SK-N-SH (cell line): ENCODE measurements at regions of chr11 and their contacts with region 1.

Region 1: DNA sequence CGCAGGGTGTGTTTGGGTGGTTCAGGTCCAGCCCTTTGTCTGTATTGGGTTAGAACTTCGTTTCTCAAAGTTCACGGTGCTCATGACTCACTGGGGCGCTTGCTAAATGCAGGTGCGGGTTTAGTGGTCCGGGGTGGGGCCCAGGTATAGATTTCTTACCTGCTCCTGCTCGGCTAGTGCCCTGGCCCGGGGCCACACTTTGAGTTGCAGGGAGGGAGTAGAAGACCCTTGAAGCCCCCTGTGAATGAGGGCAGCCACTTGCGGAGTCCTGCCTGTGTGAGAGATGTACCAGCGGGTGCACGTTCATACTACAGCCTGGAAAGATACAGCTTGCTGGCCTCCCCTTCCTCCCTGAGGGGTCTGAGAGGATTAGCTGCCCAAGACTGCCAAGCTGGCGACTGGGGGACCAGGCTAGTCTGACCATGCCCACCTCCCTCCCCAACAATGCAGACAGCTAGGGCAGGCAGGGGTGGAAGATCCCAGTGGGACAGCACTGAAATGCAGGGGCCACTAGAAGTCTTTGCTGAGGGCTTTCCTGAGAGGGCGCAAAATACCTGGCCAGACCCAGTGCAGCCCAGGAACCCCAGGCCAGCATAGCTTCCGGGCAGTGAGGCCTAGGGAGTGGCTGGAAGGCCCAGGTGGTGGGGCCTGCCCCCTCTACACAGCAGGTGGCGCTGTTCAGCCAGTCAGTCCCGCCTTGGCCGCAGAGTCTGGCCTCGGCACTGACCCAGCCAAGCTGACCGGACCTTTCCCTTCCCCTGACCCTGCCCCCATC is 5.1 kb upstream of the MYRF start:
- DNase-seq: peak; percentile 95
- H3K4me3 ChIP-seq: no peak overlapping the region; a peak in 1 of 4 replicates
- H3K27ac ChIP-seq: no peak overlapping the region; a peak in 1 of 4 replicates
- H3K4me1 ChIP-seq: peaks cover 0 to 11% of the 10 kb centered on the region in 2 experiments; a peak in 1 of 4 replicates
- H3K27me3 ChIP-seq: no peaks in the 10 kb centered on the region
- CTCF ChIP-seq: peak; percentile 87
- EP300 ChIP-seq: no peak
- RAD21 ChIP-seq: peak; percentile 79

Region 2: GRCh38 chr11:61724437-61724836 is 22.9 kb before region 1 on chr11:
- CTCF ChIA-PET with region 1: interaction called, 17 read pairs
- POLR2A ChIA-PET with region 1: no interaction called
- DNase-seq: no peak
- H3K4me3 ChIP-seq: no peak overlapping the region
- H3K27ac ChIP-seq: no peak overlapping the region
- H3K4me1 ChIP-seq: peaks cover 0 to 5% of the 10 kb centered on the region in 2 experiments; a peak in 1 of 4 replicates
- H3K27me3 ChIP-seq: no peaks in the 10 kb centered on the region
- CTCF ChIP-seq: no peak
- EP300 ChIP-seq: no peak
- RAD21 ChIP-seq: no peak

Region 3: GRCh38 chr11:61776551-61777075 is 29.2 kb after region 1 on chr11:
- CTCF ChIA-PET with region 1: interaction called, 78 read pairs
- POLR2A ChIA-PET with region 1: no interaction called
- DNase-seq: peak; percentile 90
- H3K4me3 ChIP-seq: no peak overlapping the region
- H3K27ac ChIP-seq: no peak overlapping the region; a peak in 1 of 4 replicates
- H3K4me1 ChIP-seq: peaks cover 0 to 34% of the 10 kb centered on the region in 2 experiments; a peak in 1 of 4 replicates
- H3K27me3 ChIP-seq: no peaks in the 10 kb centered on the region
- CTCF ChIP-seq: peak; percentile 73
- EP300 ChIP-seq: no peak
- RAD21 ChIP-seq: peak; percentile 70

Region 4: DNA sequence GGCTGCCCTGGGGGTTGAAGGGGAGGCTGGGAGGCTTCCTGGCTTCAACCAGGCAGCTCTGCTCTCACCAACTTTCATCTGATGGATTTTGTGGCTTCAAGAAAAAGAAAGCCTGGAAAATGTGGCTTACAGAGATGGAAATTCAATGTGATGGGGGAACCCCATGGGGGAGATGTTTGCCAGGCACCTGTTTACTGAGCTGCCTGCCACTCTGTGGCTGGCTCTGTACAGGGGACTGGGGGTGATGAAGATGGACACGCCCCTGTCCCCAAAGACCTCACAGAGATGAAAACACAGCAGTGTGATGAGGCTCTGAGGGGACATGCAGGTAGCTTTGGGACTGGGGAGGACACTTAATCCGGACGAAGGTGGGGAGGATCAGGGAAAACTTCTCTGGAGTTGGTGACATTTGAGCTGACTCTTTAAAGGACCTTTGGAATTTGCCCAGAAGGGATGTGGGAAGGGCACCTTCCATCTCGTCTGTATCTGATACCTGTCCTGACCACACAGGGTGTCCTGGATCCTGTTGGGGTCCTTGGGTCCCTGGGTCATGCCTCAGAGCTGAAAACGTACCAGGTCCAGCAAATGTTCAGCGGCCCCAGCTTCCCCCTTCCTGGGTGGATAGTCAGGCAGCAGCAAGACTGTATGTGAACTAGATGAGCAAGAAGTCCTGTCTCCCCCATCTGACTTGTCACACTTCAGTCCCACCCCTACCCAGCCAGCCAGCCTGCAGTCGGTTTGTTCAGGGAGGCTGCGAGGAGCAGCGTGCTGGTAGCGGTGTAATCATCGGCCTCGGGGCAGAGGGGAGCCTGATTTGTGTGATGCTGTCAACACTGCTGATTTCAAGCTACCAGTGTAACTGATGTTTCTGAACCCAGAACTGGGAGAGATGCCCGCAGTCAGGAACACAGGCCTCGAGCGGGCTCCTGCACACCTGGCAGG is 35.2 kb after region 1 on chr11:
- CTCF ChIA-PET with region 1: interaction called, 285 read pairs
- POLR2A ChIA-PET with region 1: interaction called, 4 read pairs
- DNase-seq: peak; percentile 71
- H3K4me3 ChIP-seq: no peak overlapping the region
- H3K27ac ChIP-seq: peak overlapping the region in 1 of 2 experiments; percentile 36; a peak in 1 of 4 replicates
- H3K4me1 ChIP-seq: peaks cover 0 to 31% of the 10 kb centered on the region in 2 experiments; a peak in 1 of 4 replicates
- H3K27me3 ChIP-seq: no peaks in the 10 kb centered on the region
- CTCF ChIP-seq: no peak
- EP300 ChIP-seq: no peak
- RAD21 ChIP-seq: no peak

Region 5: GRCh38 chr11:61816736-61817455 is 69.5 kb after region 1 on chr11 and contains the start of gene FADS1:
- CTCF ChIA-PET with region 1: interaction called, 19 read pairs
- POLR2A ChIA-PET with region 1: interaction called, 4 read pairs
- DNase-seq: peak; percentile 95
- H3K4me3 ChIP-seq: peak within 1 kb of the TSS; percentile 83 to 87
- H3K27ac ChIP-seq: peak within 1 kb of the TSS; percentile 88 to 98
- H3K4me1 ChIP-seq: peaks cover 17 to 19% of the 10 kb centered on the region in 2 experiments; a peak in 3 of 4 replicates
- H3K27me3 ChIP-seq: no peaks in the 10 kb centered on the region
- CTCF ChIP-seq: peak; percentile 63
- EP300 ChIP-seq: no peak
- RAD21 ChIP-seq: peak; percentile 36
- polyA plus RNA-seq, gene FADS1: 20.6 and 26.4 TPM in 2 replicates